ENCODE measurements at regions of chr1 and their contacts with region 1.

Region 1: GRCh38 chr1:178542560-178543356 is 29.8 kb downstream of the TEX35 start:
- DNase-seq: peak; percentile 89
- ATAC-seq: peak; percentile 77
- H3K4me3 ChIP-seq: peak overlapping the region; percentile 64
- H3K27ac ChIP-seq: peak overlapping the region; percentile 93
- H3K4me1 ChIP-seq: peaks cover 40% of the 10 kb centered on the region
- H3K27me3 ChIP-seq: no peaks in the 10 kb centered on the region
- CTCF ChIP-seq: peak; percentile 88
- POLR2A ChIP-seq: peak; percentile 21; the same call in 1 of the 2 replicates
- RAD21 ChIP-seq: peak; percentile 82

Region 2: DNA sequence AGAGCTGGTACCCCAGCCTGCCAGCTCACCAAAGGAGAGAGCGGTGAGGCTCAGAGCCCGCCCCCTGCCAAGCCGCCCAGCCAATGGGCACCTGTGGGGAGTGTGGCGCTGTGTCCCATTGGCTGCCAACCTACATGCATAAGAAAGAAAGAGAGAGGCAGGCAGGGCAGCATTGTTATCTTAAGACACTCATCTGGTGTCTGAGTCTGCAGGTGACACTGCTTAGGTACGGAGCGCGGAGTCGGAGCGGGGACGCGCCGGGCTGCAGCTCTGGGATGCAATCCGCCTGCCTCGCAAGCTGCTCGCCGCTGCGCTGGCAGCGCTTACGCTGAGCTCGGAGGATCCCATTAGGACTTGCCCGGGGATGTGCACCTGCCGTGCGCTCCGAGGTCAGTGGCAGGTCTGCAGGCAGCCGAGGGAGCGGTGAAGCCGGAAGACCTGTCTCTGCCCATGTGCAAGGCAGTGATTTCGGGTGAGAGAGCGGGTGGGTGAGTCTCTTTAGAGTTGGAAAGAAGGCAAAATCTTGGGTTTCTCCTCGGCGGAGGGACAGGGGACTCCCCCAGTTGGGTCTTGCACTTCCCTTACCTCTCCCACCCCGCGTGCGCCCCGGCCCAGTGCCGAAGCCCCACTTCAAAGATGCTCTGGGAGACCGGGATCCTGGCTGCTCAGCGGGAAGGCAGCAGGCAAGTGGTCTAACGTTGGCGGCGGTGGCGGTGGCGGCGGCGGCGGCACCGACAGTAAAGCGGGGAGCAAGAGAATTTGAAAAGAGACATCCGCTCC is 1371.8 kb before region 1 on chr1 and contains the start of gene BRINP2:
- CTCF ChIA-PET with region 1: no interaction called
- POLR2A ChIA-PET with region 1: no interaction called
- dilution Hi-C with region 1: no loop called
- in situ Hi-C with region 1: no loop called
- intact Hi-C with region 1: no loop called
- DNase-seq: peak; percentile 29
- ATAC-seq: peak; percentile 99
- H3K4me3 ChIP-seq: peak within 1 kb of the TSS; percentile 28
- H3K27ac ChIP-seq: no peak within 1 kb of the TSS
- H3K4me1 ChIP-seq: no peaks in the 10 kb centered on the region
- H3K27me3 ChIP-seq: peaks cover 44% of the 10 kb centered on the region
- CTCF ChIP-seq: no peak
- POLR2A ChIP-seq: no peak
- RAD21 ChIP-seq: no peak
- total RNA-seq, gene BRINP2: not detected in 2 replicates

Region 3: DNA sequence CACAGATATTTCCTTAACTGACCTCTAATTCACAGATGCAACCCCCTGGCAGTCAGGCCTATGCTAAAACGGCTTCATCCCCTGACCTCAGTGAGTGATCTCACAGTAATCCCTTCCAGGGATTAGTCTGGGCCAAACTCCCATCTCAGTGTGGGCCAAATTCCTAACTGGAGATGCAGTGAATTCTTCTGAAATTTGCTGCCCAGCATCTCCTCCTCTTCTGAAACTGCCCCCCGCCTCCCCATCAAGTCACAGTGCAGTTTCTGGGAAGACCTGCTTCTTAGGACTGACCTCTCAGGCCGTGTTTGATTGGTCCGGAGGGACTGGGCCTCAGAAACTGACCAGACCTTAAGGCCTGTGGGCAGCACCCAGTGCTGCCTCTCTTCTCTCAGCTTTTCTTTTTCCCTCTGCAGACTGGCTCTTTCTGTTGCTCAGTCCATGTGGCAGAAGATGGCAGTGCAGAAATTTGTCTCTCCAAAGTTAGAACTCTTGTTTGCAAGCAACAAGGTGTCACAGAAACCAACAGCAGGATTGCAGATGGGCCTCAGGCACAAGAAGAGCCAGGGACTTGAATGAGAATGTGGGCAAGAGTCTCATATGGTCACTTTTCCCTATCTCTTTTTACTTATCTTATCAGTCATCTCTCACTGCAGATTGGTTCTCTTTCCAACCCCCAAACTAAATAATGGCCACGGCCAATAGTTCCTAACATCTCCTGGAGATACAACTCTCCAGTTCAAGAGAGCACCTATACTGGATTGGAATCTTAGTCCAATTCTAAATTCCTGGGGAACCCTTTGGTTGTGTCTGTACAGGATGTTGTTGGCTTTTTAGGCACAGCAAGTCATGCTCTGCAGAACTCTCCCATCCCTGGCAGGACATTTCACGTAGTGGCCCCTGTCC is 86.7 kb after region 1 on chr1:
- CTCF ChIA-PET with region 1: interaction called, 3 read pairs
- POLR2A ChIA-PET with region 1: no interaction called
- dilution Hi-C with region 1: no loop called
- in situ Hi-C with region 1: no loop called
- intact Hi-C with region 1: loop called (anchors 5 kb)
- DNase-seq: peak; percentile 83
- ATAC-seq: peak; percentile 80
- H3K4me3 ChIP-seq: no peak overlapping the region
- H3K27ac ChIP-seq: peak overlapping the region; percentile 88
- H3K4me1 ChIP-seq: peaks cover 34% of the 10 kb centered on the region
- H3K27me3 ChIP-seq: no peaks in the 10 kb centered on the region
- CTCF ChIP-seq: peak; percentile 11; the same call in 1 of the 2 replicates
- POLR2A ChIP-seq: no peak
- RAD21 ChIP-seq: no peak

Region 4: GRCh38 chr1:178733972-178734371 is 191.2 kb after region 1 on chr1:
- CTCF ChIA-PET with region 1: interaction called, 4 read pairs
- POLR2A ChIA-PET with region 1: no interaction called
- dilution Hi-C with region 1: no loop called
- in situ Hi-C with region 1: loop called (anchors 10 kb)
- intact Hi-C with region 1: no loop called
- DNase-seq: no peak
- ATAC-seq: no peak
- H3K4me3 ChIP-seq: no peak overlapping the region
- H3K27ac ChIP-seq: no peak overlapping the region
- H3K4me1 ChIP-seq: no peaks in the 10 kb centered on the region
- H3K27me3 ChIP-seq: no peaks in the 10 kb centered on the region
- CTCF ChIP-seq: 0 out of 2 replicates have a peak, but pooled peaks have one; percentile 12
- POLR2A ChIP-seq: no peak
- RAD21 ChIP-seq: no peak

Region 5: DNA sequence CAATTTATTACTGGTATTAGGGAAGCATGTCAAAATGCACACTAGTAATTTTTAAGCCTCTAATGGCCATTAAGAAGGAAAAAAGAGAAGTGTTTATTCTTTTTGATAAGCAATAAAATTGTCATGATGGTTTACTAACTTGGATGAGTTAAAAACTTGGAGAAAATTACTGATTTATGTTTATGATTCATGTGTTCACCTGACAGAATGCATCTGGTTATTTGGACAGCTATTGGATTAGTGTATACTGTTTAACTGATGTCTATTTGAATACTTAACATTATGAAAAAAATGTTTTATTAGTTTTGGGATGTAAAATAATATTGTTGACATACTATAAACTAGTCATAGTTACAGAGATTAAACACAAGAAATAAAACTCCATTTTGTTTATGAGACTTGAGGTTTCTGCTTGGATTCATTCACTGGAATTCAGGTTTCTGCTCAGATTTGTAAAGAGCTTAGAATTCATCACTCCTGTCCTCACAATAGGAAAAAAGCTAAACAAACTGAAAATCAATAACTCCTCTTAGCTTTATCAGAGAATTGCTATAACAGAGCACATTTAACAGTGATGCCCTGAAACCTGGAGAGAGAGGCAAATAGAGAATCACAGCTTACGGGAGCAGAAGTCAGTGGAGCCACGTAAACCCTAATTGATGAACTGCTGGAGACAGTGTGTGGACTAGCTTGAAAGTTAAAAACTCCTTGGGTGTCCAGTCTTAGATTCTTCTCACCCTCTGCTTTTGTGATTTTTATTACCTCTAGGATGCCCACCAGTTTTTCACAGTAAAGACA is 239.0 kb after region 1 on chr1:
- CTCF ChIA-PET with region 1: no interaction called
- POLR2A ChIA-PET with region 1: no interaction called
- dilution Hi-C with region 1: no loop called
- in situ Hi-C with region 1: no loop called
- intact Hi-C with region 1: loop called (anchors 1 kb)
- DNase-seq: no peak
- ATAC-seq: peak; percentile 37
- H3K4me3 ChIP-seq: no peak overlapping the region
- H3K27ac ChIP-seq: peak overlapping the region; percentile 66; the same call in 1 of the 2 replicates
- H3K4me1 ChIP-seq: peaks cover 2% of the 10 kb centered on the region
- H3K27me3 ChIP-seq: no peaks in the 10 kb centered on the region
- CTCF ChIP-seq: no peak
- POLR2A ChIP-seq: no peak
- RAD21 ChIP-seq: no peak

Region 6: DNA sequence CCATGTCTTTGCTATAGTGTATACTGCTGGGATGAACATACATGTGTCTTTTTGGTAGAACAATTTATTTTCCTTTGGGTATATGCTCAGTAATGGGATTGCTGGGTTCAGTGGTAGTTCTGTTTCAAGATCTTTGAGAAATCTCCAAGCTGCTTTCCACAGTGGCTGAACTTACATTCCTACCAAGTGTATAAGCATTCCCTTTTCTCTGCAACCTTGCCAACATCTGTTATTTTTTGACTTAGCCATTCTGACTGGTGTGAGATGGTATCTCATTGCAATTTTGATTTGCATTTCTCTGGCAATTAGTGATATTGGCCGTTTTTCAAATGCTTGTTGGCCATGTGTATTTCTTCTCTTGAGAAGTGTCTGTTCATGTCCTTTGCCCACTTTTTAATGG is 365.6 kb after region 1 on chr1:
- CTCF ChIA-PET with region 1: interaction called, 3 read pairs
- POLR2A ChIA-PET with region 1: no interaction called
- dilution Hi-C with region 1: no loop called
- in situ Hi-C with region 1: no loop called
- intact Hi-C with region 1: loop called (anchors 10 kb)
- DNase-seq: peak; percentile 58
- ATAC-seq: peak; percentile 78
- H3K4me3 ChIP-seq: no peak overlapping the region
- H3K27ac ChIP-seq: no peak overlapping the region
- H3K4me1 ChIP-seq: peaks cover 1% of the 10 kb centered on the region; the same call in 1 of the 2 replicates
- H3K27me3 ChIP-seq: no peaks in the 10 kb centered on the region
- CTCF ChIP-seq: no peak
- POLR2A ChIP-seq: no peak
- RAD21 ChIP-seq: no peak